ENCODE measurements at regions of chr11 and their contacts with region 1.

Region 1: DNA sequence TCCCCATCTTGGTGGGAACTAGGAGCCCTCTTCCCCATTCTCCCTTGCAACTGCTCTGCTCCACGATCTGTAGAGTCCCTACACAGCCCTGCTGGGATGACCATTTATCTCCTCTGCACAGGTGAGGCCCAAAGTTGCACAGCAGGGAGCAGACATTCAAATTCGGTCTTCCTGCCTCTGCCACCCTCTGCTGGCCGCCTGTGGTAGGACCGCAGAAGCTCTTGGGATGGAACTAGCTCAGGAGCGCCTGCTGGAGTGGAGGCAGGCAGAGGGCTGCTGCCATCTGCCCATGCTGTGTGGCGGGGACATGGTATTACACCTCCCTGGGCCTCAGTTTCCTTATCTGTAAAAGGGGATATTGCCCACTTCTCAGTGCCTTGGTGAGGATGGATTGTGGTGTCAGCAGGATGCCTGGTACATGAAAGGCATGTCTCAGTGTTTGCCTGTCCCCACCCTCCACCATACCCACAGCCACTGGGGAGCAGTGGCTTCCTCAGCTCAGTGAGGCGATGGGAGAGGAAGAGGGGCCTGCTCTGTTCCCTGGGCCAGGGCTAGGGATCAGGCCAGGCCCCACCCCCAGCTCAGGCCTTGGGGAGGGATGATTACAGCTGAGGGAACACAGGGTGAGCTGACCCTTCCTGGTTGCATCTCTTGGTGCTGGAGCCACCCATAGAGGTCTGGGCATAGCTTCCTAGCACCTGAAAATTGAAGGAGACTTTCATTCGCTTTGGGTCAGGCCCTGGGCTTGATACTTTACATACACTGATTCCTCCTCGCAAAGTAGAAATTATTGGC is 11.3 kb upstream of the OMP start:
- DNase-seq: peak; percentile 94
- H3K4me3 Mint-ChIP-seq: no peak overlapping the region
- H3K27ac Mint-ChIP-seq: no peak overlapping the region
- H3K4me1 Mint-ChIP-seq: peaks cover 5% of the 10 kb centered on the region
- H3K27me3 Mint-ChIP-seq: no peaks in the 10 kb centered on the region

Region 2: DNA sequence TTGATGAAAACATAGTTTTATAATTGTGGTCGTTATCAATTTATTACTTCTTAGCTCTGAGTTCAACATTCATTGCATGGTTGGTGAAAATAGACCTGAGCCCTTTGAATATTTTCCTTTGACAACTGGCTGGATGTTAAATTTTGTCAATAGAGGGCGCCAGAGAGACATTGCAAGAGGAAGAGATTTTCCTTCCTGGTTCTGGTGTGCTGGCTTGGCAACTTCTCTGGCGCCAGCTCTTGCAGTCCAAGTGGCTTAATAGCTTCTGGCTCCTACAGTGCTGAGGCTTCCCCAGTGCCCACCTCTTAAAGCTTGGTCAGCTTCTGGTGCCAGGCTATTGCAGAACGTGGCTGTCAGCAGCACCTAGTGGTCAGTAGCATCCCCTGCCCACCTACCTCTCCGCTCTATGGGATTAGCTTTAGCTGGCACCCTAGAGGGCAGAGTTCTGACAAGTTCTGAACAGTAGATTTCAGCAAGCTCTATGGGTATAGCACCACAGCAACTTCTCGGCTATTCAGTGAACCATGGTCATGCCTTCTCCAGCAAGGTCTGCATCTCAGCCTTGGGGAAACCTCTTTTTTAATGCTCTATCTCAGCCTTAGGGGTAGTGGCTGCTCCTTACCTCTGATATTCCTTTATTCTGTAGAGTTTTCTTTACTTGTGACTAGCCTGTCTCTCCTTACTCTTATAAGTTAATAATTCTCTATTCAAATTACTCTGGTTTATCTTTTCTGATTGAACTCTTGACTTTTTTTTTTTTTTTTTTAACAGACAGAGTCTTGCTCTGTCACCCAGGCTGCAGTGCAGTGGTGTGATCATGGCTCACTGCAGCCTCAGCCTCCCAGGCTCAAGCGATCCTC is 171.2 kb before region 1 on chr11:
- intact Hi-C with region 1: loop called (anchors 5 kb)
- DNase-seq: peak; percentile 91
- H3K4me3 Mint-ChIP-seq: peak overlapping the region; percentile 34
- H3K27ac Mint-ChIP-seq: no peak overlapping the region
- H3K4me1 Mint-ChIP-seq: peaks cover 6% of the 10 kb centered on the region
- H3K27me3 Mint-ChIP-seq: peaks cover 7% of the 10 kb centered on the region